Cardiac septum (tissue), 1 donor: ENCODE measurements at regions of chr14 and their contacts with region 1.

Region 1: DNA sequence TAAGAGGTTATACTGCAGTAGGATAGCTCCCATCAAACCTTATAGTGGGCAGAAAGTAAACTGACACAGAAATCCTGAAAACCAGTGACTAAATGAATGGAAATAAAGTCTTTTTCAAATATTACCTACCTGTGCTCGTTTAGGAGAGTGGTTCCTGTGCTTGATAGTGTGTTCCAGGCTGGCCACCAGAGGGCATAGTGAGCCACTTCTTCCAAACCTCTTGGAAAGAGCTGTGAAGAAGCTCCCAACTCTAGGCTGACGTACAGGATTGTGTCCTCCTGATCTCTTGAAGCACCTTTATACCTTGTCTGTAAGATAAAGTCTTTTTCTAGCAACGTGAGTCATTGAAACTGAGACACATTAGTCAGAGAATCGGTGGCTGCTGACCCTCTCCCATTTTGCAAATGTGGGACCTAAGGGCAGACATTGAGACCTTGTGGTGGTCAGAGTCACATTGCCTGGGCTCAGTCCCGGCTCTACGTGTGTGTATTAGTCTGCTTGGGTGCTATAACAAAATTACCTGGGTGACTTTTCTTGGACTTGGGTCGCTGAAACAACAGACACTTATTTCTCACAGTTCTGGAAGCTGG is 17.6 kb downstream of the TDP1 start:
- DNase-seq: peak; percentile 80

Region 2: GRCh38 chr14:89589400-89590118 is 383.8 kb before region 1 on chr14:
- intact Hi-C with region 1: no loop called
- DNase-seq: no peak

Region 3: GRCh38 chr14:90058876-90059458 is 85.6 kb after region 1 on chr14:
- intact Hi-C with region 1: loop called (anchors 10 kb)
- DNase-seq: no peak

Region 4: GRCh38 chr14:90235179-90235976 is 262.0 kb after region 1 on chr14:
- intact Hi-C with region 1: loop called (anchors 2 kb)
- DNase-seq: peak; percentile 89